Prostate gland (tissue), 2 donors: ENCODE measurements at regions of chr17 and their contacts with region 1.

Region 1: DNA sequence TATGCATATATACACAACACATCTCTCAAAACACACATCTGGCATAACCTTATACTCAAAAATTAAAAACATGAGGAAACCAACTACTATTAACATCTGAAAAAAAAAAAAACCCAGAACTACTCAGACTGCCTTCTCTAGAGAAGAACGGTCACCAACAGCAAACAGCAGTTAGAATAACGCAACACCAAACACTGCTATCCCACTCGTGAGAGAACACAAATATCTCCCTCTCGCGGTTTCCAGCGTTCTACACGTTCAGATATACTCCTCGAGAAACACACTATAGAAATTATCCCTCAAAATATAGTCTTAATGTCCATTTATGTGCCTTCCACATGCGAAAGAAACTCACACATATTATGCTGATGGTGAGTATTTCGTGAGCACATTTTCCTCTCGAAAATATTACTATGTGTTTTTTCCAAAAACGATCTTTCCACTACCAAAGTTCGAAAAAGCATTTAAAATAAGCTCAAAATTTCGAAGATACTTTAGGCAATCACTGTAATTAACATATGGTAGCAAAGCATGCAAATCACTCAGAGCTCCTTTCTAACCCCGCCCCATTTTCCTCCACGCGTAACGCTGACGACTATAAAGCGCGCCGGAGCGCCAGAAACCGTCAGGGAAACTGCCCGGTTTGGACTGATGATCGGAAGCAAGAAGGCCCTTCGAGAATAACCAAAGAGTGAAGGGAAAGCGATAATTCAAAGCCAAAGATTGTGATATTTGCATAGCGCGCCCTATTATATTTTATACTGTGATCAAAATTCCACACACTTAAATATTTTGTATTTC is 60.1 kb downstream of the TEX14 start:
- DNase-seq: peak; percentile 92
- H3K4me3 ChIP-seq: peak overlapping the region; percentile 12 to 32
- H3K27ac ChIP-seq: peak overlapping the region; percentile 80 to 84
- H3K4me1 ChIP-seq: no peaks in the 10 kb centered on the region
- H3K27me3 ChIP-seq: no peaks in the 10 kb centered on the region
- CTCF ChIP-seq: peak in 3 of 4 experiments; percentile 14 to 50 (median 42)
- POLR2A ChIP-seq: peak; percentile 95

Region 2: GRCh38 chr17:58658804-58659713 is 27.3 kb after region 1 on chr17:
- intact Hi-C with region 1: loop called (anchors 2 kb)
- DNase-seq: peak; percentile 70
- H3K4me3 ChIP-seq: peak overlapping the region; percentile 21 to 26
- H3K27ac ChIP-seq: peak overlapping the region; percentile 82 to 86
- H3K4me1 ChIP-seq: no peaks in the 10 kb centered on the region
- H3K27me3 ChIP-seq: no peaks in the 10 kb centered on the region
- CTCF ChIP-seq: peak in 2 of 4 experiments; percentile 51 to 62
- POLR2A ChIP-seq: peak; percentile 93